ENCODE measurements at regions of chr16 and their contacts with region 1.

Region 1: DNA sequence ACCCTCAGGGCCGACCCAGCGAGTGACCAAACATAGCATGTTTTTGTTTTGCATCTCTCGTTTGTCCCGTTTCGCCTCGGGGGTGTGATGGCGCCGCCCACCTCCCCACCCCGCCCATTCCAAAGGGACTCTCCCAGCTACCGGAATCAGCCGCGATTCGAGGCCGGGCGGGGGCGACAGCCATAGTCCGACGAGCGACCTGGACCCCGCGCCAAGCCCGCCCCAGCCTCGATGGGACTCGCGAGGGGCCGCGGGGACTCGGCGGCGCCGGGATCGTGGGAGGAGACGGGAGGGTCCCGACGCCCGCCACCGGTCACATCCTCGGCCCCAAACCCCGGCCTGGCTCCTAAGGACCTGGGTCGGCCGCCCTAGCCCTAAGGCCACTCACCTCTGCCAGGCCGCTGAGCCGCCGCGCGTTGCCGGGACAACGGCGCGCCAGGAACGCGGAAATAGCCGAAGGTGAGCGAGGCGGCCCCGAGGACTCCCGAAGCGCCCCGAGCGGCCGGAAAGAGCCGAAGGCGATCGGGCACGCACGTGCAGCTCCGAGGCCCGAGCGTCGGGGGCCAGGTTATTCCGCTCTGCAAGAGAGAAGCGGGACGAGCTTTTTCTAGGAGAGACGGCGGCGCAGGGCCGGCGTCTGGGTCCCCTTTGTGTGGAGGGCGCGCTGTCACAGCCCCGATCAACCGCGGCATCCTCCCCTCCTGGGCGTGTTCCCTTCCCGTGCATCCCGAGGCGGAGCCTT is 1.4 kb downstream of the IFT140 start:
- DNase-seq: peak; percentile 95
- ATAC-seq: peak; percentile 55
- H3K4me3 Mint-ChIP-seq: peak overlapping the region; percentile 88
- H3K27ac Mint-ChIP-seq: peak overlapping the region; percentile 12
- H3K4me1 Mint-ChIP-seq: peaks cover 40% of the 10 kb centered on the region
- H3K27me3 Mint-ChIP-seq: peaks cover 5% of the 10 kb centered on the region
- CTCF ChIP-seq: no peak

Region 2: DNA sequence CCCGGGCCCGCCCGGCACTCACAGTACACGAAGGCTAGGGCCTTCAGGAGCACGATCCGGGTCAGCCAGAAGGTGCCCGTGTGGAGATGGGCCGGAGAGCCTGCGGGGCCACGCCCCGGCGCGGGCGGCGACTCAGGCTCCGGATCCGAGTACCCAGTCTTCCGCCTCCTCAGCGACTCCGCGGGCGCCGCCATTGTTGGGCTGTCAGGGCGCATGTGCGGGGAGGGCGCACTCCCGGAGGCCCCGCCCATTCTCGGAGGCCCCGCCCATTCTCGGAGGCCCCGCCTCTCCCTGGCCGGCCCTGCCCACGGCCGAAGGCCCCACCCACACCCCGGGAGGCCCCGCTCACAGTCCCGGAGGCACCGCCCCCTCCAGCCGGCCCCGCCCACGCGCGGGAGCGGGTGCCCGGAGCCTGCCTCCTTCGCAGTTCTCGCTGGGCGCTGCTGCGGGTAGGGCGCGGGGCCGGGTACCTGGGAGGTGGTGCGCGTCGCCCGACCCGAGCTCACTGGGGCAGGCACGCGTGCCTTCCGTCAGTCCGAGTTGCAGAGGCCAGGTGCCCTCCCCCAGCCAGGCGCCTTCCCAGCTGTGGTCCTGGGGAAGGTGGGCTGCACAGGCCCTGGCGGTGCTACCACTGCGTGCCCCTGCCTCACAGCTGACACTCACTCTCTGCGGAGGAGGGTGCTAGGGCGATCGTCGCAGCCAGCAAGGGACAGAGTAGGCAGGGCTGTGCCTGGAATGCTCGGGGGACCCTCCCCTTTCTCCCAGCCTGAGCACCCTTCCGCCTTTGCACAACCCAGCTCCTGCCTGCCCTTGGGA is 639.5 kb before region 1 on chr16 and contains the start of gene LMF1:
- CTCF ChIA-PET with region 1: no interaction called
- POLR2A ChIA-PET with region 1: no interaction called
- intact Hi-C with region 1: loop called (anchors 10 kb)
- DNase-seq: peak; percentile 100
- ATAC-seq: peak; percentile 99
- H3K4me3 Mint-ChIP-seq: peak within 1 kb of the TSS; percentile 85
- H3K27ac Mint-ChIP-seq: peak within 1 kb of the TSS; percentile 65
- H3K4me1 Mint-ChIP-seq: peaks cover 19% of the 10 kb centered on the region
- H3K27me3 Mint-ChIP-seq: peaks cover 8% of the 10 kb centered on the region
- CTCF ChIP-seq: no peak
- total RNA-seq, gene LMF1: 30.7 and 36.1 TPM in 2 replicates

Region 3: GRCh38 chr16:1188432-1189189 is 421.8 kb before region 1 on chr16:
- CTCF ChIA-PET with region 1: no interaction called
- POLR2A ChIA-PET with region 1: no interaction called
- intact Hi-C with region 1: no loop called
- DNase-seq: peak; percentile 46
- ATAC-seq: peak; percentile 57
- H3K4me3 Mint-ChIP-seq: no peak overlapping the region
- H3K27ac Mint-ChIP-seq: no peak overlapping the region
- H3K4me1 Mint-ChIP-seq: no peaks in the 10 kb centered on the region
- H3K27me3 Mint-ChIP-seq: peaks cover 3% of the 10 kb centered on the region
- CTCF ChIP-seq: no peak

Region 4: GRCh38 chr16:1420111-1420540 is 190.3 kb before region 1 on chr16:
- CTCF ChIA-PET with region 1: no interaction called
- POLR2A ChIA-PET with region 1: interaction called, 16 read pairs
- intact Hi-C with region 1: no loop called
- DNase-seq: no peak
- ATAC-seq: no peak
- H3K4me3 Mint-ChIP-seq: peak overlapping the region; percentile 85
- H3K27ac Mint-ChIP-seq: peak overlapping the region; percentile 98
- H3K4me1 Mint-ChIP-seq: peaks cover 25% of the 10 kb centered on the region
- H3K27me3 Mint-ChIP-seq: no peaks in the 10 kb centered on the region
- CTCF ChIP-seq: no peak

Region 5: DNA sequence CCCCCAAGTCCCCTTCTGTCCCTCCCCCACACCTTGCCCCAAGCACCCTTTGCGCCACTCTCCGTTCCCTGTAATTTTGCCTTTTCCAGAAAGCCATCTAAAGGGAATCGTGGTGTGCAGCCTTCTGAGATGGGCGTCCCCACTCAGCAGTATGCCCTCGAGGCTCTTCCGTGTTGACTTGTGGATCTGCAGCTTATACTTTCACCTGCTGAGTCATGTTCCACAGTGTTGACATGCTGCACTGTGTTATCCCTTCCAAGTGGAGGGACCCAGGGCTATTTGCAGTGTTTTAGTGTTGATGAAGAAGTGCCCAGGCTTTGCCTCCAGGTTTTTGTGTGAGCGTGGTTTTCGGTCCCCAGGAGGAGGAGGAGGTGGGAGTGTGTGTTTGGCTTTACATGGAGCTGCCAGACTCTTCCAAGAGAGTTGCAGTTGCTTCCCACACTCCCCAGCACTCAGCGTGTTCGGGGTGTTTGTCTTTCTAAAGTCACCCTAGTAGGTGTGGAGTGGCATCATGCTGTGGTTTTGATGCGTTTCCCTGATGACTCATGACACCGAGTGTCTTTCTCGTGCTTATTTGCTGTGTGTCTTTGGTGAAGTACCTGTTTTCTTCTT is 35.6 kb after region 1 on chr16:
- CTCF ChIA-PET with region 1: no interaction called
- POLR2A ChIA-PET with region 1: no interaction called
- intact Hi-C with region 1: loop called (anchors 2 kb)
- DNase-seq: no peak
- ATAC-seq: peak; percentile 51
- H3K4me3 Mint-ChIP-seq: no peak overlapping the region
- H3K27ac Mint-ChIP-seq: peak overlapping the region; percentile 32
- H3K4me1 Mint-ChIP-seq: peaks cover 40% of the 10 kb centered on the region
- H3K27me3 Mint-ChIP-seq: no peaks in the 10 kb centered on the region
- CTCF ChIP-seq: no peak

Region 6: GRCh38 chr16:1772736-1773584 is 162.5 kb after region 1 on chr16 and contains the starts of genes EME2 and MRPS34:
- CTCF ChIA-PET with region 1: no interaction called
- POLR2A ChIA-PET with region 1: no interaction called
- intact Hi-C with region 1: loop called (anchors 2 kb)
- DNase-seq: peak; percentile 81
- ATAC-seq: peak; percentile 58
- H3K4me3 Mint-ChIP-seq: peak within 1 kb of the TSS; percentile 87
- H3K27ac Mint-ChIP-seq: peak within 1 kb of the TSS; percentile 89
- H3K4me1 Mint-ChIP-seq: peaks cover 24% of the 10 kb centered on the region
- H3K27me3 Mint-ChIP-seq: no peaks in the 10 kb centered on the region
- CTCF ChIP-seq: peak; percentile 50
- total RNA-seq, gene EME2: 37.1 and 49.9 TPM in 2 replicates
- total RNA-seq, gene MRPS34: 60.9 and 65.1 TPM in 2 replicates

Region 7: GRCh38 chr16:1991948-1992703 is 381.7 kb after region 1 on chr16:
- CTCF ChIA-PET with region 1: no interaction called
- POLR2A ChIA-PET with region 1: no interaction called
- intact Hi-C with region 1: loop called (anchors 5 kb)
- DNase-seq: peak; percentile 95
- ATAC-seq: peak; percentile 79
- H3K4me3 Mint-ChIP-seq: peak overlapping the region; percentile 82
- H3K27ac Mint-ChIP-seq: peak overlapping the region; percentile 88
- H3K4me1 Mint-ChIP-seq: peaks cover 29% of the 10 kb centered on the region
- H3K27me3 Mint-ChIP-seq: no peaks in the 10 kb centered on the region
- CTCF ChIP-seq: no peak

Measured in activated B cell treated with CpG ODN at 0.5 μM for 24 hours (primary cell).